ENCODE measurements at regions of chr2 and their contacts with region 1.

Region 1: GRCh38 chr2:113370478-113371091 is 66.9 kb upstream of the ZNG1B start:
- DNase-seq: peak in 41 of 42 donors; percentile 27 to 79 (median 59)

Region 2: GRCh38 chr2:113248997-113249770 is 121.4 kb before region 1 on chr2:
- intact Hi-C with region 1: loop called (anchors 10 kb)
- DNase-seq: peak; percentile 53 to 88 (median 78)

Measured in head of caudate nucleus (tissue), 42 donors.